ENCODE measurements at regions of chr3 and their contacts with region 1.

Region 1: DNA sequence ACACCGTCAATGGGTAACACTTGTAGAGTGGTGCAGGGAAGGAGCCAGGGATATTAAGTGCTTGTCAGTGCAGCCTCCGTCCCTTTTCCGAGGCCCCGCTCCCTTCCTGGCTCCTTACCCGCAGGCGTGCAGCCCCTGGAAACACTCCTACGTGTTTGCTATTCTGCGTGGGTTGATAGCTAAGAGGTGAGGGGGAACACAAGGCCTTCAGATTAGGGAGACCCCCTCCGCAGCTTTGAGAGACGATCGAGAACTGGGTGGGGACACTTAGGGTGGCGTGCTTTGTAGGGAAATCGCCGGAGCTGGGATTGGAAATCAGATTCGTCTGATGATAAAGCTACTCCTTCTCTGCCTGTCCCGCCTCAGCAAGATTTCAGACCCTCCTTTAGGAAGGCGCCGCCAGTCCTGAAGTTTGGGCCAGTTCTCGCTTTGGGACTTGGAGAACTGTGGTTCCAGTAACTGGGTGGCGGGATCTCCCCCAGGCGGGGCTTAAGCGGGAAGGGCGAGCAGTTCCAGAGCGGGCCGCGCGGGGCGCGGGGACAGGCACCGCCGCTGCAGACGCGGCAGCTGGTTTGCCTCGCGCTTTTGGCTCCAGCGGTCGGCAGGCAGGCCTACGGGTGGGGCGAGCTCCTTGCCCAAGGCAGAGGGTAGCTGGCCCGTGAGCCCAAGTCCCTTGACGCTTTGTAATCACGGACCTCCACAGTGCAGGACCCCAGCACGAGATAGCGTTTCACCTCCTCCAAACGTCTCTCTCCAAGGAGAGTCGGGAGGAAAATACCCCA is 8.0 kb upstream of the FAM107A start:
- DNase-seq: peak; percentile 59 to 75
- ATAC-seq: peak; percentile 89 to 94
- H3K4me3 ChIP-seq: peak overlapping the region; percentile 64 to 81 (median 75)
- H3K27ac ChIP-seq: peak overlapping the region; percentile 73 to 85 (median 78)
- H3K4me1 ChIP-seq: peaks cover 20 to 22% of the 10 kb centered on the region in 2 donors
- H3K27me3 ChIP-seq: peaks cover 13 to 15% (median 14%) of the 10 kb centered on the region in 3 donors
- CTCF ChIP-seq: peak; percentile 77 to 96 (median 85)
- POLR2A ChIP-seq: no peak

Region 2: GRCh38 chr3:57757642-57758297 is 827.4 kb before region 1 on chr3:
- in situ Hi-C with region 1: no loop called
- intact Hi-C with region 1: no loop called
- DNase-seq: peak in 1 of 2 donors; percentile 29
- ATAC-seq: no peak
- H3K4me3 ChIP-seq: peak overlapping the region; percentile 86 to 98 (median 96)
- H3K27ac ChIP-seq: peak overlapping the region; percentile 96 to 99 (median 98)
- H3K4me1 ChIP-seq: peaks cover 38 to 43% of the 10 kb centered on the region in 2 donors
- H3K27me3 ChIP-seq: no peaks in the 10 kb centered on the region
- CTCF ChIP-seq: no peak
- POLR2A ChIP-seq: no peak

Region 3: GRCh38 chr3:58568572-58569286 is 16.5 kb before region 1 on chr3:
- in situ Hi-C with region 1: no loop called
- intact Hi-C with region 1: loop called (anchors 1 kb)
- DNase-seq: peak; percentile 35 to 62
- ATAC-seq: peak; percentile 61 to 82
- H3K4me3 ChIP-seq: no peak overlapping the region
- H3K27ac ChIP-seq: no peak overlapping the region
- H3K4me1 ChIP-seq: no peaks in the 10 kb centered on the region
- H3K27me3 ChIP-seq: no peaks in the 10 kb centered on the region
- CTCF ChIP-seq: peak; percentile 81 to 95 (median 89)
- POLR2A ChIP-seq: no peak